ENCODE measurements at regions of chr2 and their contacts with region 1.

Region 1: DNA sequence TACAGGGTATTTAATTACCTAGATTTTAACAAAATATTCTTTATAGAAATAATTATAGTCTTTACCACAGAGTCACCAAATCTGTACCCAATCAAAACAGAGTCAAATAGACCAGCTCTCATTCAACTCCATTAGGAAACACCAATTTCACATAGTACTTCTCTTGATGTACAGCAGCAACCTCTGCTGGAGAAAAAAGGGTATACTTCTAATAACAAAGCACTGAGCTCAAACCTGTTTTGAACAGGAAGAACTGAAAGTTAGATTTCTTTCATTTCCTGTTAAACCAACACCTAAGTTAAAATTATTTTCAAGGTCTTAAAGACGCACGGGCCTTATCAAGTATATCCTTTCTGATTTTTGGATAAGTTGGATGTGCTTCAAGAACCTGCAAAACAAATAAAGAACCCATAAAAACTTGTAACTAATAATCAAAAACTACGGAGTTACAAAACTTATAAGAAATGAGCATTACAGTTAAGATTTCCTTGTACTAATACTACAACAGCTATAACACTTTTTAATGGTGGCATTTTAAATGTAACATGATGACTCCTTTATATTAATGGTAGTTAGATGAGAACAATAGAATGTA is 79.0 kb downstream of the TTC21B start:
- DNase-seq: peak; percentile 65
- H3K4me3 ChIP-seq: no peak overlapping the region
- H3K27ac ChIP-seq: no peak overlapping the region
- H3K4me1 ChIP-seq: peaks cover 7% of the 10 kb centered on the region
- H3K27me3 ChIP-seq: no peaks in the 10 kb centered on the region
- CTCF ChIP-seq: peak; percentile 37 to 38
- POLR2A ChIP-seq: no peak

Region 2: DNA sequence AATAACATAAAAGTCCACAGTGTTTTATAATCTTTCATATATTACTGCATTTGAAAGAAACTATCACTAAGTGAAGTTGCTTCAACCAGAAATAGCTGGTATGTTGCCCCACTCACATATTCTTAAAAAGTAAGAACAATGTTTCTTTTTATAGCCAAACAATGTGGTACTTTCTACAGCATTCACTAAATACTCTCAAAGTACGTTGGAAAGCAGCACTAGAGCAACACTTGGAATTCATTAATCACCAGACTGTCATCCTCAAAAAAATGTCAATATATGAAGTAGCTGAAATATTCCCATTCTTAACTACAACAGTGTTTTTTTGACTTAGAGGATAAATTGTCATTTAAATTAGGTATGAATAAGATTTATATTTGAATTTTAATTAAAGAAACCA is 1065.8 kb before region 1 on chr2:
- CTCF ChIA-PET with region 1: no interaction called
- POLR2A ChIA-PET with region 1: no interaction called
- dilution Hi-C with region 1: no loop called
- intact Hi-C with region 1: no loop called
- DNase-seq: peak; percentile 65
- H3K4me3 ChIP-seq: no peak overlapping the region
- H3K27ac ChIP-seq: no peak overlapping the region
- H3K4me1 ChIP-seq: no peaks in the 10 kb centered on the region
- H3K27me3 ChIP-seq: no peaks in the 10 kb centered on the region
- CTCF ChIP-seq: no peak
- POLR2A ChIP-seq: no peak

Region 3: DNA sequence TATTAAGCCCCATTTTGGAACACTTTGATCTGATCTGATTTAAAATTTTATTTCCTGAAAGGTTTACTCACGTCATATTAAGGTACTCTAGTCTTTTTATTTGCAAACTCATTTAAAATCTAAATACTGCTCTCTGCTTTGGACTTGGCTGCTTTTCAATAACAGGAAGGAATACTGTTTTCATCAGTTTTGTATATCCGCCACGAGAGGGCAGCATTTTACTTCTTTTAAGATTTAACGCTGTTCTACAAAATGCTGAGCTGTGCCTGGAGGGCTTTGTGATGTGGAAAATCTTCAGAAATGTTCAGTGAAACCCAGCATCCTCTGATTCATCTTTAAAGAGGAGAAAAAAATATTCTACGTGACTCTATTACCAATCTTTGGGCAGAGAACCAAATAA is 881.7 kb before region 1 on chr2:
- CTCF ChIA-PET with region 1: interaction called, 7 read pairs
- POLR2A ChIA-PET with region 1: no interaction called
- dilution Hi-C with region 1: no loop called
- intact Hi-C with region 1: loop called (anchors 2 kb)
- DNase-seq: peak; percentile 71
- H3K4me3 ChIP-seq: no peak overlapping the region
- H3K27ac ChIP-seq: no peak overlapping the region
- H3K4me1 ChIP-seq: no peaks in the 10 kb centered on the region
- H3K27me3 ChIP-seq: no peaks in the 10 kb centered on the region
- CTCF ChIP-seq: peak; percentile 19 to 22
- POLR2A ChIP-seq: no peak

Region 4: GRCh38 chr2:165239230-165239629 is 635.3 kb before region 1 on chr2 and contains the start of gene SCN2A:
- CTCF ChIA-PET with region 1: interaction called, 30 read pairs
- POLR2A ChIA-PET with region 1: no interaction called
- dilution Hi-C with region 1: no loop called
- intact Hi-C with region 1: loop called (anchors 1 kb)
- DNase-seq: peak; percentile 60
- H3K4me3 ChIP-seq: no peak within 1 kb of the TSS
- H3K27ac ChIP-seq: no peak within 1 kb of the TSS
- H3K4me1 ChIP-seq: no peaks in the 10 kb centered on the region
- H3K27me3 ChIP-seq: no peaks in the 10 kb centered on the region
- CTCF ChIP-seq: peak; percentile 32 to 45
- POLR2A ChIP-seq: no peak
- total RNA-seq, gene SCN2A: not detected in 2 replicates

Region 5: DNA sequence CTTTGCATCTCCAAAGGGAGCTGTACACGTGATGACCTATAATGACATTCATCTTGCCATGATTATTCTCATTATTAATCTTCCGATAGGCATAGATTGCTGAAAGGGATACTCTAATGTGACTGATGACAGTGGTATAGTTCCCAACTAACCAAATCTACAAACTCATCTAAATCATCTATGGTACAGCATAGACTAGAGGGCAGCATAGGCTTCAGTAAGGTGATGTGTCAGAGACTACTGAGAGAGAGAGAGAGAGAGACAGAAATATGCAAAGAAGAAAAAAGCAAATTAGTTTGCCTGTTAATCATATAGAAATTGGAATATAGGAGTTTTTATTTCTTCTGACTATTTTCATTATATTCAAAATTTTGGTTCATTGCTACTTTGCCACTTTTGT is 315.7 kb before region 1 on chr2:
- CTCF ChIA-PET with region 1: interaction called, 10 read pairs
- POLR2A ChIA-PET with region 1: no interaction called
- dilution Hi-C with region 1: no loop called
- intact Hi-C with region 1: no loop called
- DNase-seq: no peak
- H3K4me3 ChIP-seq: no peak overlapping the region
- H3K27ac ChIP-seq: no peak overlapping the region
- H3K4me1 ChIP-seq: no peaks in the 10 kb centered on the region
- H3K27me3 ChIP-seq: peaks cover 2% of the 10 kb centered on the region in 2 experiments
- CTCF ChIP-seq: no peak
- POLR2A ChIP-seq: no peak

Region 6: DNA sequence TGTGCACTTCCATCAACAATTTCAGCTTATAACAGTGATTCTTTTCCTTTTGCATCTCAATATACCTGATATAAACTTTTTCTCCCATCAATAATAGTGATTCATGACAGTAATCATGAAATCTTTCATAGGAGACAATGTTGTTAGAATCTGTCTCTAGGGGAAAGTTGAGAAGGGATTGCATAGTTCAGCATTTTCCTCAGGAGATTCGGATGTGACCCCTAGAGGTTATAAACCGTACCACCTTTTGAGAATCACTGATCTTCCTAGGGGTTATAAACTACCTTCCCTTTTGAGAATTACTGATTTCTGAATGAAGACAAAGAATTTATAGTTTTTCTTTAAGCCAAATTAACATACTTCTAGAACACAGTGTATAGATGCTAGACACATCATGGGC is 27.5 kb before region 1 on chr2:
- CTCF ChIA-PET with region 1: interaction called, 11 read pairs
- POLR2A ChIA-PET with region 1: no interaction called
- dilution Hi-C with region 1: no loop called
- intact Hi-C with region 1: no loop called
- DNase-seq: no peak
- H3K4me3 ChIP-seq: no peak overlapping the region
- H3K27ac ChIP-seq: no peak overlapping the region
- H3K4me1 ChIP-seq: no peaks in the 10 kb centered on the region
- H3K27me3 ChIP-seq: no peaks in the 10 kb centered on the region
- CTCF ChIP-seq: no peak
- POLR2A ChIP-seq: no peak

Region 7: DNA sequence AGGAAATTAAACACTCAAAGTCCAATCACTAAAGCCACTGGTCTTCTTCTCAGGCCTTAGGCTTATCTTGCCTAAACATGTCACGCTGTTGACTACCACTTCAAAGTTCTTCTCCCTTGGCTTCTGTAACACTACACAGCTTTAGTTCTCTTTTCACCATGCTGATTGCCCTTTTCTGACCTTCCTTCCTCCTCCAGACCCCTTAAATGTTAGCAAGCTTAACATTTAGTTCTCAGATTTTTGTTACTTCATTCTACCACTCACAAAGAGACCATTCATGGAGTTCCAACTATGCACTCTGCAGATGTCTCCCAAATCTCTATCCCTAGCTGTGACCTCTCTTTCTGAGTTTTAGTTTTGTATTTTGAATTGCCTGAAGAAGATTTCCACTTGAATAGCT is 14.6 kb after region 1 on chr2:
- CTCF ChIA-PET with region 1: interaction called, 48 read pairs
- POLR2A ChIA-PET with region 1: no interaction called
- dilution Hi-C with region 1: no loop called
- intact Hi-C with region 1: no loop called
- DNase-seq: no peak
- H3K4me3 ChIP-seq: no peak overlapping the region
- H3K27ac ChIP-seq: no peak overlapping the region
- H3K4me1 ChIP-seq: no peaks in the 10 kb centered on the region
- H3K27me3 ChIP-seq: no peaks in the 10 kb centered on the region
- CTCF ChIP-seq: no peak
- POLR2A ChIP-seq: no peak

Region 8: GRCh38 chr2:165953655-165954606 is 79.4 kb after region 1 on chr2 and contains the start of gene TTC21B:
- CTCF ChIA-PET with region 1: interaction called, 17 read pairs
- POLR2A ChIA-PET with region 1: no interaction called
- dilution Hi-C with region 1: no loop called
- intact Hi-C with region 1: no loop called
- DNase-seq: peak; percentile 97
- H3K4me3 ChIP-seq: peak within 1 kb of the TSS; percentile 60 to 99 (median 93)
- H3K27ac ChIP-seq: peak within 1 kb of the TSS; percentile 81
- H3K4me1 ChIP-seq: peaks cover 17% of the 10 kb centered on the region
- H3K27me3 ChIP-seq: no peaks in the 10 kb centered on the region
- CTCF ChIP-seq: peak; percentile 76 to 78
- POLR2A ChIP-seq: peak; percentile 75
- total RNA-seq, gene TTC21B: 18.0 and 21.9 TPM in 2 replicates

Region 9: DNA sequence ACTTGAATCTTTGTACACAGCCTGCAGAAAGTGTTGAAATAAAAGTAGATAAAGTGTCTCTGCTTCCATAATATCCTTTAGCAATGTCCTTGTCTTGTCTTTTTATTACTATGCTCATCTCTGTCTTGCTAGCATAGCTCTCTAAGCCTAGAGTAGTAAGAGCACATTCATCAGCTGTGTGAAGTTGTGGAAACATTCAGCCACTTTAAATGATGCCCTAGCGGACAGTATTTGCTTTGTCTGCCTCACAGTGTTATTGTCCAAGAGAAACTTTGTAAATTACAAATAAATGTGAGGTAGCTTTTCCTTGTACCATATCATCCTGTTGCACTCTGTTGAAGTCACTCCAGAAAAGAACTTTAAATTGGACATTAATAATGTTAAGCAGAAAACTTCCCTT is 139.3 kb after region 1 on chr2:
- CTCF ChIA-PET with region 1: no interaction called
- POLR2A ChIA-PET with region 1: no interaction called
- dilution Hi-C with region 1: no loop called
- intact Hi-C with region 1: no loop called
- DNase-seq: no peak
- H3K4me3 ChIP-seq: no peak overlapping the region
- H3K27ac ChIP-seq: no peak overlapping the region
- H3K4me1 ChIP-seq: no peaks in the 10 kb centered on the region
- H3K27me3 ChIP-seq: no peaks in the 10 kb centered on the region
- CTCF ChIP-seq: no peak
- POLR2A ChIP-seq: no peak